AG04449 (cell line): ENCODE measurements at regions of chr10 and their contacts with region 1.

Region 1: DNA sequence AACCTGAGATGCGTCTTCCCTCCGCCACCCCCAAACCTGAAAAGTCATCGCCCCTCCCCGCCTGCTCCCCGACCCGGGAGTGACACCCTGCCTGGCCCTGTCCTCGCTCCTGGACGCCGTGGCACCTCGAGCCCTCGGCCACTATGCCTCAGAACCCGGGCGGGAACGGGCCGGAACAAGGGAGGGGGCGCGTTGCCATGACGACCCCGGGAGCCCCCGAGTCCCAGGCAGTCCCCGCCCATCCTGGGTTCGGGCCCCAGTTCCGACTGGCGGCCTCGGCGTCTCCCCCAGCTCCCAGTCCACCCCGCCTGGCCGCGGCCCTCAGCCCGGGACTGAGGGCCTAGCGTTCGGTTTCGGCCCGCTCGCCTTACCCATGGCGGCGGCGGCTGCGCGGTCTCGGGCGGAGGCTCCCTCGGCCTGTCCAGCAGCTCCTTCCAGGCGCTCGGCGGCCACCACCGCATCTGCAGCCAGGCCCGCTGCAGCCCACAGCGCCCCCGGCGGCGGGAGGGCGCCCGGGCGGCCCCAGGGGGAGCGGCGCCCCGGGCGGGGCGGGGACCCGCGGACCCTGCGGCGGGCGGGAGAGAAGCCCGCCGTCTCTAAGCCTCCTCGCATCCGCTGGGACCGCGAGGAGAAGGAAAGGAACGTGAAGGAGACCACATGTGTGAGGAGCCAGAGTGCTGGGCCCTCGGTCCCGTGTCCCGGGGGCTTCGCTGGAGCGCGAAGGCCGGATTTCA is at the start of gene RUFY2:
- DNase-seq: peak; percentile 1
- H3K4me3 ChIP-seq: peak within 1 kb of the TSS; percentile 98
- CTCF ChIP-seq: peak; percentile 69

Region 2: DNA sequence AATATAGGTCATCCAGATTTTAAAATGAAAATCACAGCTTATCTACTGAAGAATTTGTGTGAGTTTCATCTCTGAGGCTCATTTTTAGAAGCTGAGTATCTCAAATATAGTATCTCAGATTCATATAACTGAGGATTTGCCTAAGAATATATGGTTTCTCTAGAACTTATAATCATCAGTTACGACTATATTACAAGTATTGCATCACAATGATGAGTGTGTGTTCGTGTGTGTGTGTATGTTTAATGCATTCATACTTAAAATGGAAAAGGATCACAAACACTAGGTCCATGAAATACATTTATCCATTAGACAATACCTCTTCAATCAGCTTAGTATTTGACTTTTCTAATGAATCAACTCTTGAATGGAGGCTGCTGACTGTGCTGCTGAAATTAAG is 21.2 kb before region 1 on chr10:
- CTCF ChIA-PET with region 1: interaction called, 11 read pairs
- POLR2A ChIA-PET with region 1: no interaction called
- DNase-seq: no peak
- H3K4me3 ChIP-seq: no peak overlapping the region
- CTCF ChIP-seq: no peak

Region 3: DNA sequence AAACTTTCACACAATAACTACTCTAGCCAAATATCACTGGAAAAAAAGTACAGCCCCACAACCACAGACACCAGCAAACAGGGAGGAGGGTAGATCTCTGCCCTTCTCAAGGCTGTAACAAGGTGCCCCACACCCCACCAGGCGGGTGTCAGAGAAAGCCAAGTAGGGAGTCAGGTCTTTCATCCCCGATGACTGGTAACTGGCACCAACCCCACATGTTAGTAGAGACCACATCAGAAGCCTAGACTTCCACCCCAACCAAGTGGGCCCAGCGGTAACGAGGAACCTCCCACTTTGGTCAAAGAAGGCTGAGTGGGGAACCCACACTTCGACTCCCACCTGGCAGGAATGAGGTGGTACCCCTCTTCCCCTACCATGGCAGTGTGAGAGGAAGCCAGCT is 16.5 kb after region 1 on chr10:
- CTCF ChIA-PET with region 1: interaction called, 23 read pairs
- POLR2A ChIA-PET with region 1: no interaction called
- DNase-seq: no peak
- H3K4me3 ChIP-seq: no peak overlapping the region
- CTCF ChIP-seq: no peak

Region 4: DNA sequence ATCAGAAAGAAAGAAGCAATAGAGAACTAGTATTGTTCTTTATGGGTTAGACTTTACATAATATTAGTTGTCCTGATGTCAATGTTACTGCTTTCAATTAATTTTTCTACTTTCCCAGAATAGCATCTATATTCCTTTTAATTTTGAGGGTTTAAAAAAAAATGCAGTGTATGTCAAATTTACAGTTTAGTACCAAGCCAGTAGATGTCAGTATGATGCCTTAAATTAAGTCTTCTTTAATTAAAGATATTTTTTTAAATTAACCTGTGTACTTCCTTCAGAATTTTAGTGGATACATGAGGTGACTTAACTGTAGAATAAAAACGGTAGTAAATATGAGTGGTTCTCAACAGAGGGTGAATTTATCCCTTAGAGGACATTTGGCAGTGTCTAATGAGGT is 385.1 kb after region 1 on chr10:
- CTCF ChIA-PET with region 1: no interaction called
- POLR2A ChIA-PET with region 1: no interaction called
- DNase-seq: no peak
- H3K4me3 ChIP-seq: no peak overlapping the region
- CTCF ChIP-seq: no peak